ENCODE measurements at regions of chr1 and their contacts with region 1.

Region 1: DNA sequence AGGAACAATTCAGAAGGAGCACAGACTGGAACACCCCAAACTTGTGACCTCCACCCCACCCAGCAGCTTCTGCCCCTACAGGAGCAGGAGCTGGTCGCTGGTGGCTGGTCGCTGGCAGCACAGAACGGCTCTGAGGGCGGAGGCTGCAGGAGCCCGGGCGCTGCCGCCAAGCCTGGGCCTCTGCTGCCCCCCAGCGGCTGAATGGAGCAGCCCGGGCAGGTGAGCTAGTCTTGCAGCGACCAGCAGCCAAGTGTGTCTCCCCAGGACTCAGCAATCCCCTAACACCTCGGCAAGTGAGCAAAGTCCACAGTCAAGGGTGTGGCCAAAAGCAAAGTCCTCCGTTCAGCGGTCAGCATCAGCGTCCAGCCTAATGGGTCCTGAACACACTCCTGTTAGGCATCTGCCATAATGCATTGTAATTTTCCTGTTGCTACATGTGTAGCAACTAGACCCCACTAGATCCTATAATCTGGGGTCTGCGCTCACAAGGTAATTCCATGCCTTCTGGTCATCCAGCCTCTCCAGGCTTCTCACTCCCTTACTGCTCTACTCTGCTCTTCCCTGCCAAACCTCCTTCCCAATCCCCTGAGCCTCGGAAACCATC is 12.1 kb upstream of the GJB5 start:
- DNase-seq: peak; percentile 92
- ATAC-seq: peak; percentile 93
- H3K4me3 Mint-ChIP-seq: no peak overlapping the region
- H3K27ac Mint-ChIP-seq: no peak overlapping the region
- H3K4me1 Mint-ChIP-seq: peaks cover 10% of the 10 kb centered on the region
- H3K27me3 Mint-ChIP-seq: peaks cover 8% of the 10 kb centered on the region
- CTCF ChIP-seq: peak; percentile 90

Region 2: GRCh38 chr1:34419663-34420136 is 323.1 kb before region 1 on chr1:
- CTCF ChIA-PET with region 1: interaction called, 15 read pairs
- POLR2A ChIA-PET with region 1: no interaction called
- DNase-seq: peak; percentile 57
- ATAC-seq: peak; percentile 98
- H3K4me3 Mint-ChIP-seq: no peak overlapping the region
- H3K27ac Mint-ChIP-seq: no peak overlapping the region
- H3K4me1 Mint-ChIP-seq: peaks cover 8% of the 10 kb centered on the region
- H3K27me3 Mint-ChIP-seq: peaks cover 5% of the 10 kb centered on the region; the same call in 1 of the 2 replicates
- CTCF ChIP-seq: no peak

Region 3: GRCh38 chr1:34547043-34547674 is 195.6 kb before region 1 on chr1:
- CTCF ChIA-PET with region 1: interaction called, 17 read pairs
- POLR2A ChIA-PET with region 1: no interaction called
- DNase-seq: peak; percentile 35
- ATAC-seq: peak; percentile 97
- H3K4me3 Mint-ChIP-seq: no peak overlapping the region
- H3K27ac Mint-ChIP-seq: no peak overlapping the region
- H3K4me1 Mint-ChIP-seq: peaks cover 4% of the 10 kb centered on the region; the same call in 1 of the 2 replicates
- H3K27me3 Mint-ChIP-seq: peaks cover 10% of the 10 kb centered on the region
- CTCF ChIP-seq: peak; percentile 39

Region 4: DNA sequence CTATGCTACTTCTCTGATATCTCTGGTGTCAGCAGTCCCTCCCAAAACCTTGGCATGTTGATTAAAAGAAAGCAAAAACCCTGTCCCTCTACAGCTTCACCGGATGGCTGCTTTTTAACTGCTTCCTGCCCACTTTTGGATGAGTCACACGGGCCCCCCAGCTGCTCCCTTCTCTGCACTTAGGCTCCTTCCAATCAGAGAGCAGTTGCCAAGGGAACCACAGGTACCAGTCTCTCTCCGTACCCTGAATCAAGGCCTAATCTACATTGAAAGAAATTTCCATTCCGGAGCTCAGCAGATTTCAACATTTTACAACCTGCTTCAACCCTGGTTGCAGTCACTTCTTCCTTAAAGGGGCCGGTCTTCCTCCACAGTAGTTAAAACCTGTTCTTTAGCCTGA is 58.5 kb before region 1 on chr1:
- CTCF ChIA-PET with region 1: interaction called, 29 read pairs
- POLR2A ChIA-PET with region 1: no interaction called
- DNase-seq: peak; percentile 24
- ATAC-seq: peak; percentile 86
- H3K4me3 Mint-ChIP-seq: peak overlapping the region; percentile 29; the same call in 1 of the 2 replicates
- H3K27ac Mint-ChIP-seq: peak overlapping the region; percentile 50
- H3K4me1 Mint-ChIP-seq: peaks cover 21% of the 10 kb centered on the region
- H3K27me3 Mint-ChIP-seq: peaks cover 2% of the 10 kb centered on the region
- CTCF ChIP-seq: no peak

Region 5: GRCh38 chr1:34726861-34727260 is 15.9 kb before region 1 on chr1:
- CTCF ChIA-PET with region 1: interaction called, 17 read pairs
- POLR2A ChIA-PET with region 1: no interaction called
- DNase-seq: no peak
- ATAC-seq: no peak
- H3K4me3 Mint-ChIP-seq: no peak overlapping the region
- H3K27ac Mint-ChIP-seq: no peak overlapping the region
- H3K4me1 Mint-ChIP-seq: no peaks in the 10 kb centered on the region
- H3K27me3 Mint-ChIP-seq: peaks cover 19% of the 10 kb centered on the region
- CTCF ChIP-seq: no peak

Region 6: DNA sequence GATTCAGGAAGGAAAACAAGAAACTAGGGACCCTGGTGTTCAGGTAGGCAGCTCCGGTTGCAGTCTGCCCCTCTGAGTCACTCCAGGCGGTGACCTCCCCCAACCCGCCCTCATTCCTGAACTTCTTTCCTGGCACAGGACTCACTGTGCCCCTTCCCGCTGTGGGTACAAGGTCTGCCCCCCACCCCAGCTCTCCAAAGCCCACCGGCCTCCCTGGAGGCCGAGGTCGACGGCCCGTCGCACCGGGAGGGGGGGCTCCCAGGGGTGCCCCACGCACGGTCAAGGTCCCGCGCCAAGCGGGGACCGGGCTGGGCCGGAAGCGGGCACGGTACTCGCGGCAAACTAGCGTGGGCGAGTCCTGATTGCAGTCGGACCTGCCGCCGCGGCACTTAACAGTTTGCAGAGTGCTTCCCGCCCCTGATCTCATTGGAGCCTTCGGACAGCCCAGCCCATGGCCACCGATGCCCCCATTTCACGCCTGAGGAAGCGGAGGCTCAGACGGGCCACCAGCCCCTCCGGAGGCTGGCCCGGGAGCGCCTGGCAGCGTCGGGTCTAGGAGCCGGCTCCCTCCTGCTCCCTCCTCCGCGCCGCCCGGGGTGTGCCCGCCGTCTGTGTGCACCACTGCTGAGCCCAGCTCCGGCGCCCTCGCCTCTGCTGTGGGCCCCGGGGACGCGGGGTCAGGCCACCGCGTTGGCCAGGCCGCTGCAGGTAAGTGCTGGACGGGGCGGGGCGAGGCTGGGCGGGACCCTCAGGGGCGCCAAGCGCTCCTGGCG is 38.5 kb after region 1 on chr1 and contains the start of gene GJB3:
- CTCF ChIA-PET with region 1: interaction called, 24 read pairs
- POLR2A ChIA-PET with region 1: no interaction called
- DNase-seq: peak; percentile 61
- ATAC-seq: peak; percentile 58
- H3K4me3 Mint-ChIP-seq: peak within 1 kb of the TSS; percentile 68
- H3K27ac Mint-ChIP-seq: no peak within 1 kb of the TSS
- H3K4me1 Mint-ChIP-seq: peaks cover 7% of the 10 kb centered on the region; the same call in 1 of the 2 replicates
- H3K27me3 Mint-ChIP-seq: peaks cover 57% of the 10 kb centered on the region
- CTCF ChIP-seq: no peak
- total RNA-seq, gene GJB3: 0.34 to 0.48 TPM (median 0.46 TPM) in 3 replicates

Region 7: DNA sequence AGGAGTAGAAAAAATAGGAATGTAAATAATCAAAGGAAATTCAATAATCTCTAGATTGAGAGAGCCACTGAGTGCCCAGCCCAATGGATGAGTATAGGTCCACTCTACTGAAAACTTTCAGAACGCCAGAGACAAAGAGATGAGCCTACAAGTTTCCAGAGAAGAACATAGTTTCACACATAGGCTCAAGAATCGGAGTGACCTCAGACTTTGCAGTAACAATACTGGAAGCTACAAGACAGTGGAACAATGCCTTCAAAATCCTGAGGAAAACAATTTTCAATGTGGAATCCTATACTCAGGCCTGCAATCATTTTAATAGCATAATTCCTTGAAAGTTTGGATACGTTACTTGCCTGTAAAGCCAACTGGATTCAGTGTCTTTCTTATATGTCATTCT is 61.0 kb after region 1 on chr1:
- CTCF ChIA-PET with region 1: no interaction called
- POLR2A ChIA-PET with region 1: no interaction called
- DNase-seq: no peak
- ATAC-seq: no peak
- H3K4me3 Mint-ChIP-seq: no peak overlapping the region
- H3K27ac Mint-ChIP-seq: no peak overlapping the region
- H3K4me1 Mint-ChIP-seq: no peaks in the 10 kb centered on the region
- H3K27me3 Mint-ChIP-seq: peaks cover 2% of the 10 kb centered on the region; the same call in 1 of the 2 replicates
- CTCF ChIP-seq: no peak

Measured in WTC11 (cell line).